Heart right ventricle (tissue), 16 donors: ENCODE measurements at regions of chr2 and their contacts with region 1.

Region 1: GRCh38 chr2:28108143-28108542 is 217.6 kb downstream of the BABAM2 start:
- DNase-seq: no peak
- ATAC-seq: no peak
- H3K4me3 ChIP-seq: no peak overlapping the region
- H3K27ac ChIP-seq: peak overlapping the region in 1 of 10 donors; percentile 27
- H3K4me1 ChIP-seq: peaks cover 0 to 20% (median 10%) of the 10 kb centered on the region in 9 donors
- H3K27me3 ChIP-seq: no peaks in the 10 kb centered on the region
- CTCF ChIP-seq: no peak

Region 2: GRCh38 chr2:26652361-26653041 is 1455.6 kb before region 1 on chr2:
- intact Hi-C with region 1: no loop called
- DNase-seq: no peak
- ATAC-seq: peak in 1 of 8 donors; percentile 19
- H3K4me3 ChIP-seq: no peak overlapping the region
- H3K27ac ChIP-seq: no peak overlapping the region
- H3K4me1 ChIP-seq: no peaks in the 10 kb centered on the region
- H3K27me3 ChIP-seq: peaks cover 0 to 8% (median 0%) of the 10 kb centered on the region in 7 donors
- CTCF ChIP-seq: no peak

Region 3: GRCh38 chr2:27771548-27772335 is 336.4 kb before region 1 on chr2 and contains the start of gene MRPL33:
- intact Hi-C with region 1: no loop called
- DNase-seq: peak; percentile 95
- ATAC-seq: peak; percentile 97 to 98 (median 98)
- H3K4me3 ChIP-seq: peak within 1 kb of the TSS; percentile 50 to 90 (median 73)
- H3K27ac ChIP-seq: peak within 1 kb of the TSS; percentile 62 to 96 (median 92)
- H3K4me1 ChIP-seq: peaks cover 5 to 51% (median 41%) of the 10 kb centered on the region in 9 donors
- H3K27me3 ChIP-seq: no peaks in the 10 kb centered on the region
- CTCF ChIP-seq: no peak
- total RNA-seq, gene MRPL33: 170 to 416 (median 253) TPM

Region 4: GRCh38 chr2:28142386-28142785 is 34.2 kb after region 1 on chr2:
- intact Hi-C with region 1: loop called in 1 of 10 experiments (anchors 5 kb)
- DNase-seq: no peak
- ATAC-seq: peak in 6 of 8 donors; percentile 21 to 55 (median 42)
- H3K4me3 ChIP-seq: no peak overlapping the region
- H3K27ac ChIP-seq: peak overlapping the region in 3 of 10 donors; percentile 9 to 28 (median 25)
- H3K4me1 ChIP-seq: peaks cover 0 to 16% (median 4%) of the 10 kb centered on the region in 9 donors
- H3K27me3 ChIP-seq: no peaks in the 10 kb centered on the region
- CTCF ChIP-seq: no peak